SK-N-SH (cell line): ENCODE measurements at regions of chr2 and their contacts with region 1.

Region 1: DNA sequence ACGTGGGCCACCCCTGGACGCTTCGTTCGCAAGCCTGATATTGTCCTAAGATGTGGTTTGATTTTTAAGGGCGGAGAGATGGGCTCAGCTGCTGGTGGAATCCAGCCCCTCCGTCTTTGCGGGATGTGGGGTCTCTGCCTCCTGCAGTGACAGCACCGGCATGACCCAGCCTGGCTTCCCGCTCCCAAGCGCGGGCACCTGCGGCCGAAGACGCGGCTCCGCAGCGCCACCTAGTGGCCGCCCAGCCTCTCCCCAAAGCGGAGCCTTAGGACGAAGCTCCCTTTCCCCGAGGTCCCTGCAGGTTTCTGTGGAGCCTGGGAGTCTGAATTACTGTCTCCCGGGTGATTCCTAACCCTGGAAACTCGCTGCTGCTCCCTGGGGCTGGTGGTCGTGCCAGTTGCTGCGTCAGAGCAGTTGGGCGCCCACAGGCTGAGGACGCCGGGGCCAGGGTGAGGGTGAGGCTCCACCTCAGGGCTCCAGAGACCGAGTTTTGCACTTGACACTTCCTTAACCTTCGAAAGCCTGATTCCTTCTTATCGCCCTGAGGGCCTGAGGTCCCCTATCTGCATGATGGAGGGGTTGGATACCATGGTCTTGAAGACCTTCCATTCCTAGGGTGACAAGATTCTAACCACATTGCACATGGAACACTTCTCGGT is 137.5 kb downstream of the TPO start:
- DNase-seq: peak; percentile 96
- H3K4me3 ChIP-seq: peak overlapping the region in 1 of 2 experiments; percentile 25; a peak in 1 of 4 replicates
- H3K27ac ChIP-seq: no peak overlapping the region
- H3K4me1 ChIP-seq: peaks cover 0 to 18% of the 10 kb centered on the region in 2 experiments; a peak in 1 of 4 replicates
- H3K27me3 ChIP-seq: no peaks in the 10 kb centered on the region
- CTCF ChIP-seq: peak; percentile 99
- EP300 ChIP-seq: no peak
- RAD21 ChIP-seq: peak; percentile 73

Region 2: GRCh38 chr2:950080-950966 is 600.5 kb before region 1 on chr2 and contains the start of gene SNTG2:
- CTCF ChIA-PET with region 1: interaction called, 65 read pairs
- POLR2A ChIA-PET with region 1: no interaction called
- DNase-seq: peak; percentile 97
- H3K4me3 ChIP-seq: peak within 1 kb of the TSS in 1 of 2 experiments; percentile 49; a peak in 2 of 4 replicates
- H3K27ac ChIP-seq: no peak within 1 kb of the TSS
- H3K4me1 ChIP-seq: peaks cover 0 to 6% of the 10 kb centered on the region in 2 experiments; a peak in 1 of 4 replicates
- H3K27me3 ChIP-seq: no peaks in the 10 kb centered on the region
- CTCF ChIP-seq: no peak
- EP300 ChIP-seq: no peak
- RAD21 ChIP-seq: no peak
- polyA plus RNA-seq, gene SNTG2: not detected in 2 replicates

Region 3: GRCh38 chr2:1236606-1237005 is 314.2 kb before region 1 on chr2:
- CTCF ChIA-PET with region 1: interaction called, 16 read pairs
- POLR2A ChIA-PET with region 1: no interaction called
- DNase-seq: no peak
- H3K4me3 ChIP-seq: no peak overlapping the region
- H3K27ac ChIP-seq: no peak overlapping the region
- H3K4me1 ChIP-seq: peaks cover 0 to 10% of the 10 kb centered on the region in 2 experiments; a peak in 1 of 4 replicates
- H3K27me3 ChIP-seq: no peaks in the 10 kb centered on the region
- CTCF ChIP-seq: no peak
- EP300 ChIP-seq: no peak
- RAD21 ChIP-seq: no peak

Region 4: GRCh38 chr2:1418566-1418965 is 132.2 kb before region 1 on chr2:
- CTCF ChIA-PET with region 1: no interaction called
- POLR2A ChIA-PET with region 1: no interaction called
- DNase-seq: no peak
- H3K4me3 ChIP-seq: no peak overlapping the region
- H3K27ac ChIP-seq: no peak overlapping the region
- H3K4me1 ChIP-seq: no peaks in the 10 kb centered on the region
- H3K27me3 ChIP-seq: no peaks in the 10 kb centered on the region
- CTCF ChIP-seq: no peak
- EP300 ChIP-seq: no peak
- RAD21 ChIP-seq: no peak

Region 5: GRCh38 chr2:1538663-1539062 is 12.1 kb before region 1 on chr2:
- CTCF ChIA-PET with region 1: interaction called, 39 read pairs
- POLR2A ChIA-PET with region 1: no interaction called
- DNase-seq: peak; percentile 79
- H3K4me3 ChIP-seq: no peak overlapping the region
- H3K27ac ChIP-seq: no peak overlapping the region
- H3K4me1 ChIP-seq: peaks cover 0 to 23% of the 10 kb centered on the region in 2 experiments; a peak in 2 of 4 replicates
- H3K27me3 ChIP-seq: no peaks in the 10 kb centered on the region
- CTCF ChIP-seq: peak; percentile 57
- EP300 ChIP-seq: no peak
- RAD21 ChIP-seq: peak; percentile 62

Region 6: GRCh38 chr2:1591978-1592907 is 41.5 kb after region 1 on chr2:
- CTCF ChIA-PET with region 1: interaction called, 19 read pairs
- POLR2A ChIA-PET with region 1: no interaction called
- DNase-seq: peak; percentile 83
- H3K4me3 ChIP-seq: no peak overlapping the region
- H3K27ac ChIP-seq: no peak overlapping the region
- H3K4me1 ChIP-seq: peaks cover 14 to 44% of the 10 kb centered on the region in 2 experiments; a peak in 2 of 4 replicates
- H3K27me3 ChIP-seq: no peaks in the 10 kb centered on the region
- CTCF ChIP-seq: peak; percentile 50
- EP300 ChIP-seq: 0 out of 4 replicates have a peak, but pooled peaks of 1 of the 2 experiments have one; percentile 8
- RAD21 ChIP-seq: peak; percentile 75

Region 7: DNA sequence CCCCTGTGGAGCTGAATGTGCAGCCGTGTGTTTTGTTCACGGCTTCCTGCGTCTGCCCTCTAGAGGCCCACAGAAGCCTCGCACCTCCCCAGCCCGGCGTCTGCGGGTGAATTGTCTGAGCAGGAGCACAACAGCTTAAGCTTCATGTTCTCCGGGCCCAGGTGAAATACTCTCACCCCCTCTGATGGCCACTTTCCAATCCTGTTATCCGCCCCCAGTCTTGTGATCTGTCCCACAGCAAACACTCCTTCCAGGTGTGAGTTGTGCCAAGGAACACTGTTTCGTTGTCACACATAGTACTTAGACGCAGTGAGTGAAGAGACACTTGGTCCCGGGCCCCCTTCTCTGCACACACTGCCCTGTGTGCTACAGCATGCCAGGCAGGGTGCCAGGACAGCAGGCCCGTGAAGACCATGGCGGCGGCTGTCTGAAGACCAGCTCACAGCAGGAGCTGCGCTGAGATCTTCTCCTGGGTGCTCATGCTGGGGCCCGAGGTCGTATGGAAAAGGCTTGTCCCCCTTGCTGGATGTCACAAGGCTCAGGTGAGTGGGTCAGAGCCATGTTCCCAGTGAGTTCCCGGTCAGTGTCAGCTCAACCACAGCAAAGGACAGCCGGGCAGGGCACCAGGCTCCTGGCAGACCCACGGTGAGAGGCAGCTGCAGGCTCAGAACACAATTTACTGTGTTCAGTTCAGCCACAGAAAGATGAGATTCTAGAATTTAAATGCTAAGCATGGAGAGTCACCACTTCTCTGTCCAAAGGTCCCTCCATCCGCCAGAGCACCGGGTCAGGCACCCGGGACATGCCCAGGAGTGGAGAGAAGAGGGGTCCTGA is 200.4 kb after region 1 on chr2:
- CTCF ChIA-PET with region 1: interaction called, 73 read pairs
- POLR2A ChIA-PET with region 1: no interaction called
- DNase-seq: peak; percentile 91
- H3K4me3 ChIP-seq: no peak overlapping the region; a peak in 1 of 4 replicates
- H3K27ac ChIP-seq: no peak overlapping the region
- H3K4me1 ChIP-seq: peaks cover 4 to 13% of the 10 kb centered on the region in 2 experiments; a peak in 2 of 4 replicates
- H3K27me3 ChIP-seq: no peaks in the 10 kb centered on the region
- CTCF ChIP-seq: peak; percentile 94
- EP300 ChIP-seq: no peak
- RAD21 ChIP-seq: peak; percentile 90